Thyroid gland (tissue), 4 donors: ENCODE measurements at regions of chr17 and their contacts with region 1.

Region 1: GRCh38 chr17:78019367-78019975 is 61.0 kb downstream of the TNRC6C start:
- DNase-seq: no peak
- H3K4me3 ChIP-seq: no peak overlapping the region
- H3K27ac ChIP-seq: no peak overlapping the region
- H3K4me1 ChIP-seq: no peaks in the 10 kb centered on the region
- H3K27me3 ChIP-seq: no peaks in the 10 kb centered on the region
- CTCF ChIP-seq: peak in 5 of 6 experiments; percentile 25 to 62 (median 48)
- POLR2A ChIP-seq: no peak

Region 2: GRCh38 chr17:77542551-77543490 is 476.6 kb before region 1 on chr17:
- intact Hi-C with region 1: loop called (anchors 5 kb)
- DNase-seq: peak; percentile 80 to 85
- H3K4me3 ChIP-seq: no peak overlapping the region
- H3K27ac ChIP-seq: no peak overlapping the region
- H3K4me1 ChIP-seq: peaks cover 0 to 8% of the 10 kb centered on the region in 2 donors
- H3K27me3 ChIP-seq: no peaks in the 10 kb centered on the region
- CTCF ChIP-seq: peak; percentile 76 to 94 (median 90)
- POLR2A ChIP-seq: no peak